WTC11 (cell line): ENCODE measurements at regions of chr20 and their contacts with region 1.

Region 1: DNA sequence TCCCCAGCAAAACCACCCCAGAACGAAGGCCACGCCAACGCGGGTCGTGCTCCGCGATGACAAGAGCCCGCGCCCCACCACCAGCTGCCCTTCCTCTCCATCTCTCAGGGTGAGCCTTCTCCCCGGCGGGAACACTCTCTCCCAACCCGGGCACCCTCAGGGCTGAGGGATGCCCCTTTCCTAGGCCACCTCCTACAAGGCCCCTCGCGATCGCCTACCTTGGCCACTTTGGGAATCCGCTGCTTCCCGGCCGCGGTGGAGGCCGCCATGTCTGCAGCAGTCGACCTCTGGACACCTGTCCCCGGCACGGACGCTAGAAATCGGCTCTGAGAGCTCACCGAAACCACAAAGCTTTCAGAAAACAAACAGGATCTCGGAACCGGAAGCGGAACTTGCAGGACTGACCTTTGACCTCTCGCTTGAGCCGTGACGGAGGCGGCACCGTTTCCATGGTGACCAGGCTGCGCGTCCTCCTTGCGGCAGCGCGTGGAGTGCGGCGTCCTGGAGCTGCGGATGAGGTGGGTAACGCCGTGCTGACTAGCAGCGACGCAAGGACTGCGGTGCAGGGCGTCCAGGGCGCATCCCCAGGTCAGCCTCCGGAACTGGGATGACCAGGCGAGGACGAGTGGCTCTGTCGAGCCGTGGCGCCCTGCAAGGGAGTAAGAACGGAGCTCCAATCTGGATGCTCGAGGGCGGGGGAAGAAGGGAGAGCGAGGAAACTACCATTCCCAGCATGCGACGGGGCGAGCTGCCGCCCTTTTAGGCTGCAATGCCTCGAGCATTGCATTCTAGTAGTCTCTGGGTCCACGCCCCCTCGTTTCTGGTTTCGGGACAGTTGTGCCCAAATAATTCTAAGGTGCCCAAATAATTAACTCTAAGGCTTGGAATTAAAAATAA is at the starts of genes CFAP61 and CRNKL1:
- DNase-seq: peak; percentile 97
- ATAC-seq: peak; percentile 95
- H3K4me3 Mint-ChIP-seq: peak within 1 kb of the TSS; percentile 98
- H3K27ac Mint-ChIP-seq: peak within 1 kb of the TSS; percentile 99
- H3K4me1 Mint-ChIP-seq: peaks cover 2% of the 10 kb centered on the region; the same call in 1 of the 2 replicates
- H3K27me3 Mint-ChIP-seq: no peaks in the 10 kb centered on the region
- CTCF ChIP-seq: no peak
- total RNA-seq, gene CFAP61: 0.18 to 0.61 TPM in 2 of 3 replicates, not detected in the other
- total RNA-seq, gene CRNKL1: 21.8 to 22.6 TPM (median 22.2 TPM) in 3 replicates

Region 2: DNA sequence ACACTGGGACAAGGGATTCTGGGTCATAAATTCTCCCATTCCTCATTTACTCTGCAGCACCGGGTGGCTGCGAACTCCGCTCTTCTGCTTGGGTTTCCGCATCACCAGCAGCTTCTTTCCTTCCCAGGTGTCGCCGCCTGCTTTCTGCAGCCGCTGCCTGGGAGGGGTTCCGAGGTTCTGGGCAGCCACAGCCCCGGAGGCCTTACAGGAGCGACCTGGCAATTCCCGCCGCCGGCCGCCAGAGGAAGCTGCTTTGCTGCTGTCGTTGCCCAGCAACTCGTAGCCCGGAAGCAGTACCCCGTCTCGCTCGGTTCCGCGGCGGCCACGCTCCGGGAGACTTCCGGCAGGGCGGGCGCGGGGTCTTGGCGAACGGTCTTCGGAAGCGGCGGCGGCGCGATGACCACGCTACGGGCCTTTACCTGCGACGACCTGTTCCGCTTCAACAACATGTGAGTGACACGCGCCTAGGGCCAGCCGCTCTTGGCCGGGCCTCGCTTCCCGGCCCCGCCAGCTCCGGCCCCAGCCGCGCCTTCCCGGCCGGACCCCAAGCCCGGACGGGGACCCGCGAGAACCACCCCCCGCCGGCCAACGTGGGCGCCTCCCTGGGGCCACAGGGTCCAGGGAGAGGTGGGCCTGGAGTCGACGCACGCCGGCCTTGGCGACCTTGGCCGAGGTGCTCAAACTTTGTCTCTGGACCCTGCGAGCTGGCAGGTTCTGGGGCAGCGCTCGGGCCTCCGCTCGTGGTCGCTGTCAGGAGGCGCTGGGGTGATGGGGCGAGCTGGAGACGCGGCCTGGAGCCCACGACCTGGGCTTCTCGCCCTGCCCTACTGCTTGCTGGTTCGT is 35.1 kb before region 1 on chr20 and contains the start of gene NAA20:
- CTCF ChIA-PET with region 1: interaction called, 20 read pairs
- POLR2A ChIA-PET with region 1: interaction called, 8 read pairs
- DNase-seq: peak; percentile 96
- ATAC-seq: peak; percentile 96
- H3K4me3 Mint-ChIP-seq: peak within 1 kb of the TSS; percentile 87
- H3K27ac Mint-ChIP-seq: peak within 1 kb of the TSS; percentile 94
- H3K4me1 Mint-ChIP-seq: peaks cover 22% of the 10 kb centered on the region
- H3K27me3 Mint-ChIP-seq: no peaks in the 10 kb centered on the region; the same call in 1 of the 2 replicates
- CTCF ChIP-seq: 0 out of 2 replicates have a peak, but pooled peaks have one; percentile 17
- total RNA-seq, gene NAA20: 28.9 to 34.0 TPM (median 30.6 TPM) in 3 replicates